Psoas muscle (tissue), 8 donors: ENCODE measurements at regions of chr16 and their contacts with region 1.

Region 1: DNA sequence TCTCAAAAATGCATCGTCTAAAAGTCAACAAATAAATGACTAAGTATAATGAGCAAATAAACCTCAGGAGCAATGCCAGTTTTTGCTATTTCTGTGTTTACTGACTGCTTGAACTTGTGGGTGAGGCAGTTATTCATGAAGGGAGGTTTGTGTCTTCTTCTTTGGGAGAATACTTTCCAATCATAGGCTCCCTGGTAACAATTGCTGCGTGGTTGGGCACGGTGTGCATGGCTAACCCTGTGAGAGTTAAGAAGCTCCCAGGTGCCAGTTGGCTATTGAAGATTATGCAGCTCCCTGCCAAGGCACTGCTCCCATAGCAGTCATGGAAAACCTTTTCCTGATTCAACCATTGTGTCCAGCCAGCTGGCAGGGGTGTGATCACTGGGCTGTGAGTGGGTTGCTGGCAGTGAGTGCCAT is 775.9 kb upstream of the GOT2 start:
- DNase-seq: no peak
- ATAC-seq: no peak
- H3K4me3 ChIP-seq: no peak overlapping the region
- H3K27ac ChIP-seq: no peak overlapping the region
- H3K4me1 ChIP-seq: no peaks in the 10 kb centered on the region
- H3K27me3 ChIP-seq: no peaks in the 10 kb centered on the region
- CTCF ChIP-seq: no peak

Region 2: DNA sequence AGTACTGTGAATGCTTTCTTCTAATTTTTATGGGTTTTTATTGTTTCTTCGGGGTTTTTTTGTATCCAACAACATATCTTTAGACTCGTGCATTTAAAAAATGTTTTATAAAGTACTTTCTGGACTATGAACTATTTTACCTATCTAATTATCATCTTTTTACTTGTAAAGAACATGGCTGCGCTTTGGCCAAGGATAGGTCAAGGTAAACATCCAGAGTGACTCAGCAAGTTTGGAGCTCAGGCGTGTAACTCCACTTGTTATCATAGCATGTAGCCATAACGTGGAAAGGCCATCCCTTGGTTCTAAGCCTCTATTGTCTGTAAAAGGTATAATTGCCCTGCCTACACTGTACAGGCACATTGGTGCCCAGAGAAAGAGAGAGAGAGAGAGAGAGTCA is 42.1 kb after region 1 on chr16:
- intact Hi-C with region 1: loop called in 1 of 2 experiments (anchors 2 kb)
- DNase-seq: no peak
- ATAC-seq: no peak
- H3K4me3 ChIP-seq: no peak overlapping the region
- H3K27ac ChIP-seq: no peak overlapping the region
- H3K4me1 ChIP-seq: no peaks in the 10 kb centered on the region
- H3K27me3 ChIP-seq: no peaks in the 10 kb centered on the region
- CTCF ChIP-seq: no peak

Region 3: GRCh38 chr16:59758848-59759247 is 248.8 kb after region 1 on chr16:
- intact Hi-C with region 1: no loop called
- DNase-seq: no peak
- ATAC-seq: no peak
- H3K4me3 ChIP-seq: no peak overlapping the region
- H3K27ac ChIP-seq: no peak overlapping the region
- H3K4me1 ChIP-seq: no peaks in the 10 kb centered on the region
- H3K27me3 ChIP-seq: no peaks in the 10 kb centered on the region
- CTCF ChIP-seq: no peak